CD4-positive, alpha-beta T cell (primary cell): ENCODE measurements at regions of chr12 and their contacts with region 1.

Region 1: GRCh38 chr12:54214553-54215406 is 26.0 kb upstream of the SMUG1 start:
- DNase-seq: peak; percentile 78 to 96 (median 86)
- ATAC-seq: peak; percentile 79
- H3K4me3 ChIP-seq: peak overlapping the region; percentile 53
- H3K4me3 Mint-ChIP-seq: peak overlapping the region; percentile 54
- H3K27ac ChIP-seq: no peak overlapping the region
- H3K27ac Mint-ChIP-seq: no peak overlapping the region
- H3K4me1 ChIP-seq: peaks cover 41% of the 10 kb centered on the region
- H3K4me1 Mint-ChIP-seq: peaks cover 46% of the 10 kb centered on the region
- H3K27me3 ChIP-seq: peaks cover 0 to 5% of the 10 kb centered on the region in 2 experiments
- H3K27me3 Mint-ChIP-seq: peaks cover 13% of the 10 kb centered on the region
- CTCF ChIP-seq: peak; percentile 99

Region 2: DNA sequence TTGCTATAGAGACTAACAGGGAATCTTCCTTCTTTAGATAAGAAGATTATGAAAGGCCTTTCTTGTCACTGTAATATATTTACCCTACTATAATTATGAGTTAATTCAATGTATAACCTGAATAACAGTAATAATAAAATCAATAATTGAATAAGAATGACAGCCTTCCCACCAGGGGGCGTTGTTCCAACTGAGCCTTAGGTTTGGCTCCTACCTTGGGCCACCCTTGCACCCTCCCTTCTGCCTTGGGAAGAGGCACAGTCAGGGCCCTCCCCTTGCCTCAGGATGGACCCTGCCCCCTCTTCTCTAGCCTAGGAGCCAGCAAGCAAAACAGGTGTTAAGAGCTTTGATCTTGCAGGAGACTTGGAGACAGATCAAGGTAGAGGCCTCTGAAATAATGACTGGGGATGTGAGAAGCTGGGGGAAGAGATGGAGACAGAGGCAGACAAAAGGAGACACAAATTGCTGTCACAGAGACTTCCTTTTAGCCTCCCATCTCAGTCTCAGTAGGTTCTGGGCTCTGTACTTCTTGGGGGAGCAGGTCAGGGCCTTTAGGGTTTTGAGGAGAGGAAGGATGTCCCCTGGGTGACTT is 422.9 kb before region 1 on chr12:
- CTCF ChIA-PET with region 1: no interaction called
- POLR2A ChIA-PET with region 1: no interaction called
- intact Hi-C with region 1: loop called in 1 of 2 experiments (anchors 5 kb)
- DNase-seq: peak in 13 of 14 experiments; percentile 3 to 62 (median 20)
- ATAC-seq: no peak
- H3K4me3 ChIP-seq: no peak overlapping the region
- H3K4me3 Mint-ChIP-seq: no peak overlapping the region
- H3K27ac ChIP-seq: no peak overlapping the region
- H3K27ac Mint-ChIP-seq: no peak overlapping the region
- H3K4me1 ChIP-seq: peaks cover 3% of the 10 kb centered on the region
- H3K4me1 Mint-ChIP-seq: no peaks in the 10 kb centered on the region
- H3K27me3 ChIP-seq: peaks cover 20 to 32% of the 10 kb centered on the region in 2 experiments
- H3K27me3 Mint-ChIP-seq: peaks cover 38% of the 10 kb centered on the region
- CTCF ChIP-seq: peak; percentile 69

Region 3: GRCh38 chr12:54201001-54201794 is 13.6 kb before region 1 on chr12:
- CTCF ChIA-PET with region 1: interaction called, 23 read pairs
- POLR2A ChIA-PET with region 1: no interaction called
- intact Hi-C with region 1: no loop called
- DNase-seq: peak; percentile 46 to 83 (median 57)
- ATAC-seq: peak; percentile 98
- H3K4me3 ChIP-seq: no peak overlapping the region
- H3K4me3 Mint-ChIP-seq: no peak overlapping the region
- H3K27ac ChIP-seq: no peak overlapping the region
- H3K27ac Mint-ChIP-seq: no peak overlapping the region
- H3K4me1 ChIP-seq: peaks cover 5% of the 10 kb centered on the region
- H3K4me1 Mint-ChIP-seq: no peaks in the 10 kb centered on the region
- H3K27me3 ChIP-seq: peaks cover 50 to 61% of the 10 kb centered on the region in 2 experiments
- H3K27me3 Mint-ChIP-seq: peaks cover 89% of the 10 kb centered on the region
- CTCF ChIP-seq: peak; percentile 92